Left ventricle myocardium superior (tissue), 1 donor: ENCODE measurements at regions of chr18 and their contacts with region 1.

Region 1: DNA sequence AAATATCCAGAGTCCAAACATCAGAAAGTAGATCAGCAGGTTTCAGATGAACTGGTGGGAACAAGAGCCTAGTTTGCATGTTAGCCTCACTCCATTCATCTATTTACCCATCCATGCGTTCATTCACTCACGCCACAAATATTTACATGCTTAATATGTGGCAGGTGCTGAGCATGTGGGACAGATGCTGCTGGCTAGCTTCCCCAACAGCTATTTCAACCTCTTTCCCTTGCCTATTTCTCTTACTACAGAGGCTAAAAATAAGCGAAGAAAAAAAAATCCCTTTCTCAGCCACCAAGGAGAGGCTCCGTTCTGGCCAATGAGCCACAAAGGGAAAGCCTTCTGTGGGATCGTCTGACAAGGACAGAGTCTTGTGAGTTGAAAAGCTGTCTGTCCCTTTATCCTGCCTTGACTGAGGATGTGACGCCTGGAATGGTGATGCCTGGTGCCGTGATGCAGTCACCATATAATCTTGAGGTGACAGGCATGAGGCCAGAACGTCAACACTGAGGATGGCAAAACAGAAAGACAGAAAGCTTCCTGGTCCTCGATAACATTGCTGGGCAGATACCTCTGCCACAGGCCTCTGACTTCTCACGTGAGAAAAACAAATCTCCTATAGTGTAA is 78.2 kb downstream of the KCTD1 start:
- DNase-seq: no peak
- ATAC-seq: no peak

Region 2: DNA sequence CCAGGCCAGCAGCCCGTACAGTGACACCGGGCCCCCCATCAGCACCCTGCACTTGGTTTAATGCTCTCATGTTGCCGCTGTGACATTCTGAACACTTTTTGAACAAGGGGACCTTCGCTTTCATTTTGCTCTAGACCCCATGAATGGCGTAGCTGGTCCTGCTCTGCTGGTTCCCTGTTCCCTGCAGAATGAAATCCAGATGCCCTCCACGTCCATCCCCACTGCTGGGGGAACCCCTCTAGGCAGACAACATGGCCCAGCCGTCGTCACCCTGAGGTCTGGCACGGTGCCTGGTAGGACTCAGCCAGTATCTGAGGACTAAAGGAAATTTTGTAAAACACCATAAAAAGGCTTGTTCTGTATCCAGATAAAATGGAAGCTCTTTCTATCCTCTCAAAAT is 50.4 kb before region 1 on chr18:
- intact Hi-C with region 1: loop called (anchors 10 kb)
- DNase-seq: no peak
- ATAC-seq: no peak

Region 3: DNA sequence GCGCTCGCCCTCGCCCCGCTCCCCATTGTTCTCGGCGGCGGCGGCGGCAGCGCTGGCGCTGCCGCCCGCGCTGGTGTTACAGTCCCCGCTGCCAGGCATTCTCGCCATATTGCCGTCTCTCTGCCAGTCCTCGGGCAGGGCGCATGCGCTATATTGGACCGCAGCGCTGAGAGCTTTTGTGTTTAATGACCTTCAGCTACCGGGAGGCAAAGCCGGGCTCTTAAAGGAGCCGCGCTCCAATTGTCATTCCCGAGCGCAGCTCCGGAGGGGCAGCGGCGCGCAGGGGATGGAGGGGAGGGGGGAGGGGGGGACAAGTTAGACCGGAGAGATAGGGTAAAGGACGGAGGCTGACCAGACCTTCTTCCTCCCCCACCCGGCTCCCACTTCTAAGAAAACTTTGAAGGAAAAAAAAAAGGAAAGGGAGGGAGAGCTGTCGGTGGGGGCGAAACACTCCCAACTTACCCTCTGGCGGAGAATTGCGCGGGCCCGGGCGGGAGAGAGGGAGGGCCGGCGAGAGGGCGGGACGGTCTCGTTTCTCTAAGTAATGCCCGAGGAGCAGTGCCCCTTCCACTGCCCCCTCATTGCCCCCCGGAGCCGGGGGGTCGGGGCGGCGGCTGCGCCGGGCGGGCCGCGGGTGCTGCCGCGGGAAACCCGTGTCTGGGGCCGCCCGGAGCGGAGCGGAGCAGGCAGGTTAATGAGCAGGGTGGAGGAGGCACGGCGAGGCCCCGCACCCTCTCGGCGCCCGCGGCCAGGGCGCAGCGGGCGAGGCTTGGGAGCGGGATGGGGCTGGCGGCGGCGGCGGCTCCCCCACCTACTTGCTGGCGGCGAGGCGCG is 78.5 kb after region 1 on chr18 and contains the start of gene KCTD1:
- intact Hi-C with region 1: loop called (anchors 10 kb)
- DNase-seq: peak; percentile 87
- ATAC-seq: peak; percentile 77
- total RNA-seq, gene KCTD1: 17.2 TPM

Region 4: DNA sequence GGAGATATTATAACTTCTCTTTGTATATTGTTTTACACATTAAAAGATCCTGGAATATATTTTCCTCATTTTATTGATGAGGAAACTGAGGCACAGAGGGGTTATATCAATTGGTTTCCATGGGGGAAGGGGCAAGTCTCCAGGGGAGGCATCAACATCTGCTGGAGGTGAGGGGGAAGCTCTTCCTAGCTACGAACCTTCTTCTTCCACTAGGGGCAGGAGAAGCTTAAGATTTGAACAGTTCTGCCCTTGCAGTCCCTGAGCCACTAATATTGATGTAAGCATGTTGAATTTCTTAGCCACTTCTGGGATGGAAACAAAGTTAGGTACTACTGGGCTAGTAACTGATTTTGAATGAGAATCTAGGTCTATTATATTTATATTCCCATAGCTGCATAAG is 535.5 kb after region 1 on chr18:
- intact Hi-C with region 1: no loop called
- DNase-seq: no peak
- ATAC-seq: no peak